Mammary epithelial cell (primary cell): ENCODE measurements at regions of chr17 and their contacts with region 1.

Region 1: DNA sequence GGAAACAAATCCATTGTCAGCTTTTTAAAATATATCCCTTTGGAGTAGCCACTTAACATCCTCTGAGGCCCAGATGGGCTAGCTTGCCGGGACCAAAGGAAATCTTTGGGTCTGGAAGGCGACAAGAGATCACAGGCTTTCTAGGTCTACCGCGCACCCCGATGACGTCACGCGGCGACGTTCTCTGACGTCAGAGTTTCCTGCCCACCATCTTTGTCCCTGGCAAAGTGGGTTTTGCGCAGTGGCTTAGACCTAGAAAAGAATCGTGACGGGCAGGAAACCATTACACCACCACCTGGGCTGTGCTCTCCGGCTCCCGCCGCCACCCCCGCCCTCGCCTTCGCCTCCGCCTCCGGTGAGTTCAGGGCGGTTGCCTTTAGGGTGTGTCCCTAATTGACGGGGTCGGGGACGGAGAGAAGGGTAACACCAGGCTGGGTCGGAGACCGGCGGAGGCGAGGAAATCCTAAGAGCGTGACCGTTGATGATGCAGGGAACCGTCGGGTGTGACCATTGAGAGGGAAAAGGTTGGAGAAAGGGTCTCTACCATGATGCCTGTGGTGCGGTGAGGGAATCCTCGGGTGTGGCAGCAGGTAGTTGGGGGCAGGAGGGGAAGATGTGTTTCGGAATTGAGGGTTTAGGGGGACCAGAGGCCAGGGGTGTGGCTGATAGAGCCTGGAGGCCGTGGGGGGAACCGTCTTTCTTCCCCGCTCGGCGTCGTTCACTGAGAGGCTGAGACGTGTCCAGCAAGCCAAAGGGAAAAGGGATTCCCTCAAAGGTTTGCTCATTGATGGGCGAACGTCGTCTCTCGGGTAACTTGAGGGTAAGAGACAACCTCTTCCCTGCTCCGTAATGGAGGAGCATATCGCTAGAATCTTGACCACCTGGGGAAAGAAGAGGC is at the start of gene AP2B1:
- DNase-seq: peak; percentile 96
- H3K4me3 ChIP-seq: peak within 1 kb of the TSS; percentile 38 to 89 (median 84)
- H3K27ac ChIP-seq: peak within 1 kb of the TSS; percentile 89
- H3K4me1 ChIP-seq: peaks cover 7% of the 10 kb centered on the region
- H3K27me3 ChIP-seq: no peaks in the 10 kb centered on the region
- CTCF ChIP-seq: no peak
- total RNA-seq, gene AP2B1: 168 to 227 TPM

Region 2: GRCh38 chr17:35568541-35568940 is 18.8 kb before region 1 on chr17:
- CTCF ChIA-PET with region 1: no interaction called
- dilution Hi-C with region 1: no loop called
- in situ Hi-C with region 1: no loop called
- intact Hi-C with region 1: loop called (anchors 1 kb)
- DNase-seq: peak; percentile 64
- H3K4me3 ChIP-seq: peak overlapping the region; percentile 74 to 91 (median 85)
- H3K27ac ChIP-seq: peak overlapping the region; percentile 80
- H3K4me1 ChIP-seq: peaks cover 9% of the 10 kb centered on the region
- H3K27me3 ChIP-seq: no peaks in the 10 kb centered on the region
- CTCF ChIP-seq: no peak

Region 3: GRCh38 chr17:35660902-35661301 is 73.6 kb after region 1 on chr17:
- CTCF ChIA-PET with region 1: no interaction called
- dilution Hi-C with region 1: no loop called
- in situ Hi-C with region 1: no loop called
- intact Hi-C with region 1: no loop called
- DNase-seq: no peak
- H3K4me3 ChIP-seq: no peak overlapping the region
- H3K27ac ChIP-seq: no peak overlapping the region
- H3K4me1 ChIP-seq: no peaks in the 10 kb centered on the region
- H3K27me3 ChIP-seq: no peaks in the 10 kb centered on the region
- CTCF ChIP-seq: no peak